ENCODE measurements at regions of chr6 and their contacts with region 1.

Region 1: GRCh38 chr6:31795616-31796298 is at the start of gene VARS1:
- DNase-seq: peak; percentile 92
- ATAC-seq: peak; percentile 82
- H3K4me3 Mint-ChIP-seq: peak within 1 kb of the TSS; percentile 95
- H3K27ac Mint-ChIP-seq: peak within 1 kb of the TSS; percentile 95
- H3K4me1 Mint-ChIP-seq: peaks cover 47% of the 10 kb centered on the region
- H3K27me3 Mint-ChIP-seq: no peaks in the 10 kb centered on the region
- total RNA-seq, gene VARS1: 147 to 169 TPM

Region 2: GRCh38 chr6:31729515-31729978 is 66.2 kb before region 1 on chr6:
- CTCF ChIA-PET with region 1: interaction called, 3 read pairs
- POLR2A ChIA-PET with region 1: interaction called, 3 read pairs
- intact Hi-C with region 1: loop called in 1 of 2 experiments (anchors 1 kb)
- DNase-seq: peak; percentile 86
- ATAC-seq: peak; percentile 59
- H3K4me3 Mint-ChIP-seq: peak overlapping the region; percentile 69
- H3K27ac Mint-ChIP-seq: peak overlapping the region; percentile 5
- H3K4me1 Mint-ChIP-seq: peaks cover 65% of the 10 kb centered on the region
- H3K27me3 Mint-ChIP-seq: no peaks in the 10 kb centered on the region

Region 3: GRCh38 chr6:31806465-31807272 is 10.9 kb after region 1 on chr6 and contains the start of gene LSM2:
- CTCF ChIA-PET with region 1: interaction called, 15 read pairs
- POLR2A ChIA-PET with region 1: interaction called, 9 read pairs
- intact Hi-C with region 1: loop called (anchors 1 kb)
- DNase-seq: peak; percentile 99
- ATAC-seq: peak; percentile 99
- H3K4me3 Mint-ChIP-seq: peak within 1 kb of the TSS; percentile 91
- H3K27ac Mint-ChIP-seq: peak within 1 kb of the TSS; percentile 94
- H3K4me1 Mint-ChIP-seq: peaks cover 22% of the 10 kb centered on the region
- H3K27me3 Mint-ChIP-seq: no peaks in the 10 kb centered on the region
- total RNA-seq, gene LSM2: 112 to 124 TPM

Region 4: GRCh38 chr6:31827286-31828079 is 31.7 kb after region 1 on chr6 and contains the start of gene HSPA1B:
- CTCF ChIA-PET with region 1: interaction called, 7 read pairs
- POLR2A ChIA-PET with region 1: interaction called, 5 read pairs
- intact Hi-C with region 1: loop called in 1 of 2 experiments (anchors 1 kb)
- DNase-seq: peak; percentile 97
- ATAC-seq: peak; percentile 83
- H3K4me3 Mint-ChIP-seq: peak within 1 kb of the TSS; percentile 77
- H3K27ac Mint-ChIP-seq: peak within 1 kb of the TSS; percentile 92
- H3K4me1 Mint-ChIP-seq: peaks cover 43% of the 10 kb centered on the region
- H3K27me3 Mint-ChIP-seq: no peaks in the 10 kb centered on the region
- total RNA-seq, gene HSPA1B: 54.6 to 61.1 TPM

Region 5: GRCh38 chr6:31862344-31863227 is 66.8 kb after region 1 on chr6 and contains the start of gene NEU1:
- CTCF ChIA-PET with region 1: no interaction called
- POLR2A ChIA-PET with region 1: no interaction called
- intact Hi-C with region 1: loop called in 1 of 2 experiments (anchors 1 kb)
- DNase-seq: peak; percentile 100
- ATAC-seq: peak; percentile 98
- H3K4me3 Mint-ChIP-seq: peak within 1 kb of the TSS; percentile 90
- H3K27ac Mint-ChIP-seq: peak within 1 kb of the TSS; percentile 91
- H3K4me1 Mint-ChIP-seq: peaks cover 27% of the 10 kb centered on the region
- H3K27me3 Mint-ChIP-seq: no peaks in the 10 kb centered on the region
- total RNA-seq, gene NEU1: 11.6 to 11.8 TPM

Region 6: GRCh38 chr6:32070814-32071543 is 275.2 kb after region 1 on chr6:
- CTCF ChIA-PET with region 1: no interaction called
- POLR2A ChIA-PET with region 1: no interaction called
- intact Hi-C with region 1: no loop called
- DNase-seq: no peak
- ATAC-seq: no peak
- H3K4me3 Mint-ChIP-seq: no peak overlapping the region
- H3K27ac Mint-ChIP-seq: no peak overlapping the region
- H3K4me1 Mint-ChIP-seq: no peaks in the 10 kb centered on the region
- H3K27me3 Mint-ChIP-seq: no peaks in the 10 kb centered on the region